ENCODE measurements at regions of chr2 and their contacts with region 1.

Region 1: GRCh38 chr2:210460322-210461227 is 16.0 kb downstream of the LANCL1 start:
- DNase-seq: no peak
- ATAC-seq: no peak
- H3K4me3 ChIP-seq: no peak overlapping the region
- H3K27ac ChIP-seq: no peak overlapping the region
- H3K4me1 ChIP-seq: no peaks in the 10 kb centered on the region
- H3K27me3 ChIP-seq: no peaks in the 10 kb centered on the region
- CTCF ChIP-seq: no peak

Region 2: DNA sequence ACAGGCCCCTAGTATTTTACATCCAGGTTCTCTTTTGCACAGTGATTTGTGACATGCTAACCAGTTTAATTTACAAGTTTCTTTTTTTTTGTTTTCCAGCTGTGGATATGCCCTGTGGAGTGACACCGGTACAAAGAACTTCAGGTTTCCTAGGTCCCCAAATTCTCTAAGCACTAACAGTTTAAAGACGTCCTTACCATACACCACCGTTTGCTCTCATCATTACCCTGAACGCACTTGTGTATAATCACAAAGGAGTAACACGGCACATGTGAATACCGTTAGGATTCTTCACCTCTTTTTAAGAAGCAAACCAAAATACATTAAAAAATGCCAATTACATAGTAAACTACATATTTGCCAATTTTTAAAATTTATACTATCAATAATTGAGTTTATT is 15.1 kb after region 1 on chr2:
- CTCF ChIA-PET with region 1: no interaction called
- POLR2A ChIA-PET with region 1: interaction called, 10 read pairs
- in situ Hi-C with region 1: no loop called
- intact Hi-C with region 1: no loop called
- DNase-seq: no peak
- ATAC-seq: no peak
- H3K4me3 ChIP-seq: peak overlapping the region; percentile 69 to 81
- H3K27ac ChIP-seq: peak overlapping the region; percentile 81
- H3K4me1 ChIP-seq: peaks cover 4% of the 10 kb centered on the region; the same call in 1 of the 2 replicates
- H3K27me3 ChIP-seq: no peaks in the 10 kb centered on the region
- CTCF ChIP-seq: no peak

Region 3: DNA sequence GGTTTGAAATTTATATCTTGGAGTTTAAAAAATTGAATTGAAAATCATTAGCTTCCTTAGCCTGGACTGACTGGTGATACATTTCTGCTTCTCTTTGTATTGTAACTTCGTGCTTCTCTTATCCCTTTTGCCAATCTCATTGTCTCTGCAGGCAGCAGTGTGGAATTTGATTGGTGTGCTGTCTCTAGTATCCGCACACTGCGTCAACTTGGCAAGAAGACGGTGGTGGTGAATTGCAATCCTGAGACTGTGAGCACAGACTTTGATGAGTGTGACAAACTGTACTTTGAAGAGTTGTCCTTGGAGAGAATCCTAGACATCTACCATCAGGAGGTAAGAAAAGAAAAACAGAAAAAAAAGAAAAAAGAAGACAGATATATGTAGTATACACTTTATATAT is 181.8 kb after region 1 on chr2:
- CTCF ChIA-PET with region 1: no interaction called
- POLR2A ChIA-PET with region 1: no interaction called
- in situ Hi-C with region 1: no loop called
- intact Hi-C with region 1: no loop called
- DNase-seq: no peak
- ATAC-seq: no peak
- H3K4me3 ChIP-seq: no peak overlapping the region
- H3K27ac ChIP-seq: no peak overlapping the region
- H3K4me1 ChIP-seq: no peaks in the 10 kb centered on the region
- H3K27me3 ChIP-seq: no peaks in the 10 kb centered on the region
- CTCF ChIP-seq: no peak